Activated T-helper 1 cell treated with anti-CD3 and anti-CD28 coated beads, Interleukin-12 subunit alpha, Interleukin-12 subunit beta, Interleukin-2, Interleukin-4 antibody, amounts not matched to agents 30 ng/mL and 10 ng/mL and 1 ng/mL, durations not matched to agents 14 hours and 24 hours and 36 hours (primary cell): ENCODE measurements at regions of chr10 and their contacts with region 1.

Region 1: GRCh38 chr10:23338178-23338828 is 6.3 kb downstream of the C10orf67 start:
- DNase-seq: no peak
- H3K4me3 Mint-ChIP-seq: no peak overlapping the region
- H3K27ac Mint-ChIP-seq: no peak overlapping the region
- H3K4me1 Mint-ChIP-seq: peaks cover 54% of the 10 kb centered on the region
- H3K27me3 Mint-ChIP-seq: no peaks in the 10 kb centered on the region

Region 2: GRCh38 chr10:23448802-23449570 is 110.7 kb after region 1 on chr10:
- intact Hi-C with region 1: loop called (anchors 1 kb)
- DNase-seq: no peak
- H3K4me3 Mint-ChIP-seq: peak overlapping the region; percentile 21
- H3K27ac Mint-ChIP-seq: peak overlapping the region; percentile 88
- H3K4me1 Mint-ChIP-seq: peaks cover 35% of the 10 kb centered on the region
- H3K27me3 Mint-ChIP-seq: no peaks in the 10 kb centered on the region